PC-9 (cell line): ENCODE measurements at regions of chr2 and their contacts with region 1.

Region 1: DNA sequence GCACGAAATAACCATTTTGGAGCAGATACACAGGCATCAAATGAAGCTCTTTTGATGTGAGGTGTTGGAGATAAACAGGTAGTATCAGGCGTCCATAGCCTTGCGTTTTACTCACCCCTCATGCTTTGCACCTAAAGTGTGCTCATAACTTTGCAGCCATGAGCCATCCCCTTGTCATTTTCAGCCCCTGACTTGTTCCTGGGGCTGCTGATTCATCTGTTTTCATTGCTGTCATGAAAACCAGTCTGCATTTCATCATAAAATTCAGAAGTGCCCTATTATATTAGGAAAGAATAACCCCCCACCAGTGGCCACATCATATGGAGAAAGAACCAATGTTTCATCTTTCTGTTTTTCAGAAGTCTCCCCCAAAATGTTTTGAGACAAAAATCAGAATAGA is 329.7 kb upstream of the NRP2 start:
- DNase-seq: no peak
- H3K4me3 ChIP-seq: no peak overlapping the region
- H3K27ac ChIP-seq: no peak overlapping the region
- H3K4me1 ChIP-seq: no peaks in the 10 kb centered on the region
- H3K27me3 ChIP-seq: no peaks in the 10 kb centered on the region
- CTCF ChIP-seq: no peak

Region 2: DNA sequence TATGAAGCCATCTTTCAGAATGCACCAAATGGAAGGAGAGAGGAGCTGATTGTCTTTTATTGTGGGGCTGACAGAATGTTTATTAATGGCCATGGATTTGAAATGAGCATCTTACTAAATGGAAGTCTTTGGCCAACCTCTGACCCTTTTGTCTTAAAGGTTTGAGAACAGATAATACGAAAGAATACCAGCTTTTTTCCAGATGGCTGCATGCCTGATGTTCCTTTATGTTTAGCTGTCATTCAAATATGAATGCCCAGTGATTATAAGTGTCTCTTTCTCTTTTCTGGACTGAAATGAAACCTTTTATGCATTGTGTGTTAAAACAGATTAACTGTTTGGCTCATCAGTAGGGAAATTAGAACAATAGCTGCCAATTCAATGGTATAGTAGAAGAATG is 761.4 kb before region 1 on chr2:
- CTCF ChIA-PET with region 1: no interaction called
- POLR2A ChIA-PET with region 1: interaction called, 18 read pairs
- intact Hi-C with region 1: no loop called
- DNase-seq: no peak
- H3K4me3 ChIP-seq: no peak overlapping the region
- H3K27ac ChIP-seq: no peak overlapping the region
- H3K4me1 ChIP-seq: no peaks in the 10 kb centered on the region
- H3K27me3 ChIP-seq: no peaks in the 10 kb centered on the region
- CTCF ChIP-seq: no peak

Region 3: DNA sequence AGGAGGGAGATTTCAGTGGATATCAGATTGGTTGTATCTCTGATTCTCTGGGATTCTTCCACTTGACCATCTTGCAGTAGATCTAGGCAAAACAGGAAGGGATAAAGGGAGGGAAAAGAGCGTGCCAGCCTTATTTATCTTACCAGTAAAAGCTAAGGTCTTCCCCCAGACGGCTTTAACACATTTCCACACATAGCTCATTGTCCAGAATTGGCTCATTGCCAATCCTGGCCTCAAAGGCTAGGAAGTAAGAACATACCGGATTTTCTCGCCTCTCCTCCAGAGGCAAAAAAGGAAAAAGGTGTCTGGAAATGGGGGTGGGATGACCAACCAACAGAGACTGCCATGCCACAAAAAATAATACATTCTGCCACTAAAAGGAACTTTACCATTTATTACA is 81.9 kb before region 1 on chr2:
- CTCF ChIA-PET with region 1: no interaction called
- POLR2A ChIA-PET with region 1: no interaction called
- intact Hi-C with region 1: no loop called
- DNase-seq: no peak
- H3K4me3 ChIP-seq: no peak overlapping the region
- H3K27ac ChIP-seq: no peak overlapping the region
- H3K4me1 ChIP-seq: no peaks in the 10 kb centered on the region
- H3K27me3 ChIP-seq: no peaks in the 10 kb centered on the region
- CTCF ChIP-seq: no peak

Region 4: DNA sequence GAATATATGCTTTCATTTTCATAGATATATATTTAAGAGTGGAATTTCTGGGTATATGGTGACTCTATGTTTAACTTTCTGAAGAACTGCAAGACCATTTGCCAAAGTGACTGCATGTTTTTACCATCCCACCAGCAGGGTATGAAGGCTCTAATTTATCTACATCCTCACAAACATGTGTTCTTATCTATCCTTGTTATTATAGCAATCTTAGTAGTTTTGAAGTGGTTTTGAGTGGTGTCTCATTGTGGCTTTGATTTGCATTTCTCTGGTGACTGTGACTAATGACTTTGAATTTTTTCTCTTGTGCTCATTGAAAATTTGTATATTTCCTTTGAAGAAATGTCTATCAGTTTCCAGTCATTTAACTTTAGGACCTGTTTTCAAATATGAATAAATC is 19.5 kb after region 1 on chr2:
- CTCF ChIA-PET with region 1: no interaction called
- POLR2A ChIA-PET with region 1: no interaction called
- intact Hi-C with region 1: no loop called
- DNase-seq: no peak
- H3K4me3 ChIP-seq: no peak overlapping the region
- H3K27ac ChIP-seq: no peak overlapping the region
- H3K4me1 ChIP-seq: no peaks in the 10 kb centered on the region
- H3K27me3 ChIP-seq: no peaks in the 10 kb centered on the region
- CTCF ChIP-seq: no peak

Region 5: GRCh38 chr2:205574011-205574471 is 221.4 kb after region 1 on chr2:
- CTCF ChIA-PET with region 1: no interaction called
- POLR2A ChIA-PET with region 1: no interaction called
- intact Hi-C with region 1: no loop called
- DNase-seq: no peak
- H3K4me3 ChIP-seq: no peak overlapping the region
- H3K27ac ChIP-seq: no peak overlapping the region
- H3K4me1 ChIP-seq: no peaks in the 10 kb centered on the region
- H3K27me3 ChIP-seq: no peaks in the 10 kb centered on the region
- CTCF ChIP-seq: no peak